ENCODE measurements at regions of chr3 and their contacts with region 1.

Region 1: DNA sequence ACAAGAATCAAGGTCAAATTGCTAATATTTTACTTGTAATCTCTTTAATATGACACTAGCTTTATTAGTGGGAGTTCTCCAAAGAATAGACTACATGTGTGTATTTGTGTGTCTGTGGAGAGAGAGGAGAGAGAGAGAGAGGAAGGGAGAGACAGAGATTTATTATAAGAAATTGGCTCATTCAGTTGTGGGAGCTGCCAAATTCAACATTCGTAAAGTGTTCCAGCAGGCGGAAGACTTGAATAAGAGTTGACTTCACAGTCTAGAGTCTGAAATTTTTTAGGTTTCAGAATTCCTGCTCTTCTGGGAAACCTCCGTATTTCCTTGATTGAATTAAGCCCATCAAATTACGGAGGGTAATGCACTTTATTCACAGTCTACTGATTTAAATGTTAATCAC is 4.7 kb upstream of the CLDN1 start:
- DNase-seq: no peak
- H3K4me3 Mint-ChIP-seq: no peak overlapping the region
- H3K27ac Mint-ChIP-seq: no peak overlapping the region
- H3K4me1 Mint-ChIP-seq: peaks cover 9% of the 10 kb centered on the region
- H3K27me3 Mint-ChIP-seq: peaks cover 27% of the 10 kb centered on the region

Region 2: DNA sequence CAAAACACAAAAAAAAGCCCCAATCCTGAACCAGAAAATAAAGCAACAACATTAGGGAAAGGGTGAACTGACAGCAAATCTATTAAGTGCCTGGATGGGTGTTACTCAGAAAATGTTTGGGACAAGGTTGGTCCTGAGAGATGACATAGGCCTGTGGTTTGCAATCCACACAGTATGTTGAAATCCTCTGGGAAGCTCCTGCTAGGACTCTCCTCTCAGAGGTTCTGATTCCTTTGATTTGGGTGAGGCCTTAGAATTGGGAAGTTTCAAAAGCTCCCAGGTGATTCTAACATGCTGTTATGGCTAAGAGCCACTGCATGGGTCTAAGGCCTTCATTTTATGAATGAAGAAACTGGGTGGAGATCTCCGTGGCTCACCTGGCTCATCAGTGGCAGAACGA is 23.0 kb before region 1 on chr3:
- CTCF ChIA-PET with region 1: interaction called, 6 read pairs
- POLR2A ChIA-PET with region 1: interaction called, 13 read pairs
- DNase-seq: no peak
- H3K4me3 Mint-ChIP-seq: no peak overlapping the region
- H3K27ac Mint-ChIP-seq: no peak overlapping the region
- H3K4me1 Mint-ChIP-seq: peaks cover 23% of the 10 kb centered on the region
- H3K27me3 Mint-ChIP-seq: peaks cover 2% of the 10 kb centered on the region

Measured in activated CD4-positive, alpha-beta T cell treated with anti-CD3 and anti-CD28 coated beads, Interleukin-2, amount 10 ng/mL, durations not matched to agents 7 days and 5 days (primary cell).